ENCODE measurements at regions of chr15 and their contacts with region 1.

Region 1: GRCh38 chr15:58070801-58071418 is 5.4 kb upstream of the ALDH1A2 start:
- DNase-seq: peak; percentile 79
- H3K4me3 Mint-ChIP-seq: no peak overlapping the region
- H3K27ac Mint-ChIP-seq: no peak overlapping the region
- H3K4me1 Mint-ChIP-seq: peaks cover 5% of the 10 kb centered on the region
- H3K27me3 Mint-ChIP-seq: no peaks in the 10 kb centered on the region
- CTCF ChIP-seq: peak; percentile 93

Region 2: DNA sequence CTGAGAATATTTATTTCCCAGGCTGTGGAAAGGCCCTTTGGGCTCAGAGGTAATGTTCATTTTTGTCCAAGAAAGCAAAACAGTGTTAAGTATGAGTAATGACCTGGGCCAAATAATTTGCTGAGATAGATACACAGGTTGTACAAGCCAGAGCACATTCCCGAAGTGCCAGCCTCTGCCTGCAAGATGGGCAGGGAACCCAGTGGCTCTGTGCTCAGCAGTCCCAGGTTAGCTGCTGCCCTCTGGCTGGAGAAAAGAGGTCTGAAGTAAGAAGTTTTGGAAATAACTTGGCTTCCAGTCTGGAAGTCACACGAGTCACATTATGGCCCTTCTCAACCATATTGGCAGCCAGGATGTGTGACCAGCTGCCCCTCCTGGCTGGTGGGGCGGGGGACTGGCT is 459.0 kb before region 1 on chr15:
- CTCF ChIA-PET with region 1: interaction called, 10 read pairs
- POLR2A ChIA-PET with region 1: no interaction called
- intact Hi-C with region 1: no loop called
- DNase-seq: peak; percentile 84
- H3K4me3 Mint-ChIP-seq: no peak overlapping the region
- H3K27ac Mint-ChIP-seq: peak overlapping the region; percentile 35
- H3K4me1 Mint-ChIP-seq: peaks cover 51% of the 10 kb centered on the region
- H3K27me3 Mint-ChIP-seq: no peaks in the 10 kb centered on the region
- CTCF ChIP-seq: peak; percentile 51

Region 3: GRCh38 chr15:57743424-57743823 is 327.5 kb before region 1 on chr15:
- CTCF ChIA-PET with region 1: interaction called, 224 read pairs
- POLR2A ChIA-PET with region 1: no interaction called
- intact Hi-C with region 1: no loop called
- DNase-seq: peak; percentile 14
- H3K4me3 Mint-ChIP-seq: no peak overlapping the region
- H3K27ac Mint-ChIP-seq: no peak overlapping the region
- H3K4me1 Mint-ChIP-seq: no peaks in the 10 kb centered on the region
- H3K27me3 Mint-ChIP-seq: no peaks in the 10 kb centered on the region
- CTCF ChIP-seq: no peak

Region 4: DNA sequence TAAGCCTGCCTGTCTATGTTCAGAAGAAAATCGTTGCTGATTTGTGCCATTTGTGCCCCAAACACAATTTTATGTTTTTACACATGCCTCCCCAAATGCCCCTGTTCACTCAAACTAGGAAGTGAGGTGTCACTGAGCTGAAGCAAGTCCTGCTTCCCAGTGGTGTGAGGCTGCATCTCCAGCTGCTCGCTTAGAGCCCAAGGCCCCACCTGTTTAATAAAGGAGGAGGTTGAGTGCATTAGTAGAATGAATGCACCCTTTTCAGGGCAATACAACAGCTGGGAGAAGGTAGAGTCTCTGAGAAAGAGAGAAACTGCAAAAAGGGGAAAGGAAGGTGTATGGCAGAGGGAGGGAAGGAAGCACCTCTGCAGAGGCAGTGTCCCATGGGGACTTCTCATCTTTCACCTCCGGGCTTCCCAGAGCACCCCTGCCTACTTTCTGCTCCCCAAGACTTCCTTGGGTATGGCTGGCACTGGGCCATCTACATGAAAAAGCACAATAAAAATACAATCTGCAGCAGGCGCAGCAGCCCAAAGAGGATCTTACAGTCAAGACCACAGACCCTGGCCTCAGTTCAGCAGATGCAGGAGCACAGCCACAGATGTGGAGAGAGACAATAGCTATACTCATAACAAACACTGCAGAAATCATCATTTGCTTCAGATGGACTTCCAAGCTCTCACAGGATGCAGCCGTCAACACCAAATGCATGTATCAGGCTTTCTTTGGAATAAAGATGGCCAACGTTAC is 198.5 kb before region 1 on chr15:
- CTCF ChIA-PET with region 1: interaction called, 340 read pairs
- POLR2A ChIA-PET with region 1: interaction called, 3 read pairs
- intact Hi-C with region 1: no loop called
- DNase-seq: no peak
- H3K4me3 Mint-ChIP-seq: no peak overlapping the region
- H3K27ac Mint-ChIP-seq: no peak overlapping the region
- H3K4me1 Mint-ChIP-seq: peaks cover 12% of the 10 kb centered on the region
- H3K27me3 Mint-ChIP-seq: no peaks in the 10 kb centered on the region
- CTCF ChIP-seq: no peak

Region 5: DNA sequence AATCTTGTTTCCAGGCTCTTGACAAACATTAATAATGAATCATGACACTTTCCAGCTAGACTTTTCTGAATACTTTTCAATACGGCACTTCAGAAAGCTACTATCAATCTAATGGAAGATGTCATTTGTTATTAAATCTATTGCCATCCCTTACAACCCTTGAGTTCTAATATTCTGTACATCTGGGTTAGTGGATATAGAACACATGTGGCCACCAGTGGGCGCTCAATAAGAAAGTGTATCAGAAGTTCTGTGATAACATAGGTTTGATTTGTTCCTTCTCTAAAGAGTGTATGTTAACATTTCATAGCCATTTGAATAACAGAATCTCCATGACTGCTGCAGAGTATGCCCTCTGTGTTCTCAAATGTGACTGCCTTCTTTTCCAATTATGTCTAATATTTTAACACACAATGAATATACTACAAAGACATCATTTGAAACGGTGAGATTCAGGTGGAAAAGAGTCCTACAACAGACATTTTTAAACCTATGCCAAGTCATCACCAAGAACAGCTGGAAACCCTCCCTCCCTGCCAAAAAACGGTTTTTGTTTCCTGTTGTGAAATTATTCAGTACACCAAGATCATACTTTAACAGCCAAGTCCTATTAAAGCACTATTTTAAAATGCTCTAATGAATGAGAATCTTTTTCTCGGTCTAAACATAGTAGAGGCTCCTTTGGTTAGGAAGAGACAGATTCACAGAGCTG is 27.6 kb before region 1 on chr15:
- CTCF ChIA-PET with region 1: interaction called, 72 read pairs
- POLR2A ChIA-PET with region 1: no interaction called
- intact Hi-C with region 1: no loop called
- DNase-seq: peak; percentile 66
- H3K4me3 Mint-ChIP-seq: no peak overlapping the region
- H3K27ac Mint-ChIP-seq: no peak overlapping the region
- H3K4me1 Mint-ChIP-seq: peaks cover 25% of the 10 kb centered on the region
- H3K27me3 Mint-ChIP-seq: no peaks in the 10 kb centered on the region
- CTCF ChIP-seq: peak; percentile 65